ENCODE measurements at regions of chr3 and their contacts with region 1.

Region 1: GRCh38 chr3:152258448-152259393 is 10.0 kb upstream of the MBNL1 start:
- DNase-seq: peak in 3 of 5 donors; percentile 30 to 77 (median 60)
- ATAC-seq: peak; percentile 84 to 98 (median 92)
- H3K4me3 ChIP-seq: no peak overlapping the region
- H3K27ac ChIP-seq: peak overlapping the region in 4 of 12 donors; percentile 43 to 81 (median 58)
- H3K4me1 ChIP-seq: peaks cover 0 to 62% (median 11%) of the 10 kb centered on the region in 12 donors
- H3K27me3 ChIP-seq: no peaks in the 10 kb centered on the region
- CTCF ChIP-seq: no peak
- POLR2A ChIP-seq: no peak

Region 2: DNA sequence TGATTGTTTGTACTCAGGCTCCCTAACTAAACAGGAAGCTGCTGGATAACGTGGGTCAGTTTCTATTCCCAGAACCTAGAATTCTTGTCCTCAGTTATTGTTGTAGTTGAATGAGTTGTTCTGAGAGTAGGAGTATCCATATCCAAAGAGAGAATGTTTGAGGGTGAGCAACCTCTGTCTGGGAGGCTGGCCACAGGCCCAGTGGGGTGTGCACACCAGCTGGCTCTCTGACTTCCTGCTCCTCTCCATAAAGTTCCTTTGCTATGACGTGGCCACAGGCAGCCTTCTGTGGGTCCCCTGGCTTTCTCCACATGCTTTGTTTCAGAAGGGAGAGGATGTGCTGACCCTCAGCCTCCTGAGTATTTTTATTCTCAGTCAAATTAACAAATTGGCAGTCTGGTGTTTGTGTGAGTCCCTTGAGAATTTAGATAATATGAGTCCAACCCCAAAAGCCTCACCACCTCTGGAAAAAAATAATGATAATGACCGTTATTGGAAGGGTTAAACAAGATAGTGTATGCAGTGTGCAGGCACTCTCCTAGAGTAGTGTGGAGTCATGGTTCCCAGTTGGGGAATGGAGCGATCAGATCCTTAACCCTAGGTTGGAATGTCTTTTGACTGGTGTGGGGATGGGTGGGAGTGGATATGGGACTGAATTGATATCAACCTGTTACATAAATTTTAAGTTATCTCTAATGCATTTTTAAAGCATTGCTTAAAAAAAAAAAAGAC is 1220.8 kb before region 1 on chr3:
- intact Hi-C with region 1: no loop called
- DNase-seq: peak; percentile 9 to 70 (median 34)
- ATAC-seq: peak in 3 of 4 donors; percentile 53 to 94 (median 59)
- H3K4me3 ChIP-seq: no peak overlapping the region
- H3K27ac ChIP-seq: no peak overlapping the region
- H3K4me1 ChIP-seq: no peaks in the 10 kb centered on the region
- H3K27me3 ChIP-seq: no peaks in the 10 kb centered on the region
- CTCF ChIP-seq: no peak
- POLR2A ChIP-seq: no peak

Region 3: GRCh38 chr3:151960961-151961579 is 297.7 kb before region 1 on chr3:
- intact Hi-C with region 1: no loop called
- DNase-seq: no peak
- ATAC-seq: no peak
- H3K4me3 ChIP-seq: no peak overlapping the region
- H3K27ac ChIP-seq: no peak overlapping the region
- H3K4me1 ChIP-seq: no peaks in the 10 kb centered on the region
- H3K27me3 ChIP-seq: no peaks in the 10 kb centered on the region
- CTCF ChIP-seq: no peak
- POLR2A ChIP-seq: no peak

Region 4: GRCh38 chr3:152183473-152183872 is 75.2 kb before region 1 on chr3:
- intact Hi-C with region 1: loop called in 3 of 10 experiments (anchors 10 kb)
- DNase-seq: peak in 4 of 5 donors; percentile 30 to 53 (median 39)
- ATAC-seq: peak; percentile 58 to 83 (median 66)
- H3K4me3 ChIP-seq: no peak overlapping the region
- H3K27ac ChIP-seq: no peak overlapping the region
- H3K4me1 ChIP-seq: peaks cover 0 to 10% (median 0%) of the 10 kb centered on the region in 12 donors
- H3K27me3 ChIP-seq: no peaks in the 10 kb centered on the region
- CTCF ChIP-seq: peak; percentile 45 to 78 (median 62)
- POLR2A ChIP-seq: no peak

Region 5: DNA sequence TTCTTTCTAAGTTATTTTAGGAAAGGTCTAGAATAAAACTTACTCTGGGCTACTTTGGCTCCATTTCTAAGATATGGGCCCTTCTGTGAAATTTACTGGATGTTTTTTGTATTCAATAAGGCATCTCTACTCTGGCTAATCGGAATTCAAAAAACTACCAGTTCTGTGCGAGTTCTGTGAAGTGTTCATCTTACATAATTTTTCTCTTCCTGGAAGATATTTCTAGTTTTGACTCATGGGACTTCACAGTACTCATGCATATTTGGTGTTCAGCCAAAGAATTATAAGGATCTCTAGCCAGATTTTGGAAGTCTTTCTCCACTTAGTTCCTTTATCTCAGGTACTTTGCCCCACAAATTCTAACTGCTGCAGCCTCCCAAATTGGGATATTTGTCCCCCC is 36.4 kb before region 1 on chr3:
- intact Hi-C with region 1: loop called in 2 of 10 experiments (anchors 5 kb)
- DNase-seq: no peak
- ATAC-seq: peak in 3 of 4 donors; percentile 29 to 75 (median 65)
- H3K4me3 ChIP-seq: peak overlapping the region in 1 of 12 donors; percentile 6
- H3K27ac ChIP-seq: peak overlapping the region in 10 of 12 donors; percentile 19 to 80 (median 57)
- H3K4me1 ChIP-seq: peaks cover 0 to 49% (median 8%) of the 10 kb centered on the region in 12 donors
- H3K27me3 ChIP-seq: no peaks in the 10 kb centered on the region
- CTCF ChIP-seq: no peak
- POLR2A ChIP-seq: no peak